Activated naive CD4-positive, alpha-beta T cell treated with anti-CD3 and anti-CD28 coated beads for 36 hours (primary cell): ENCODE measurements at regions of chr11 and their contacts with region 1.

Region 1: DNA sequence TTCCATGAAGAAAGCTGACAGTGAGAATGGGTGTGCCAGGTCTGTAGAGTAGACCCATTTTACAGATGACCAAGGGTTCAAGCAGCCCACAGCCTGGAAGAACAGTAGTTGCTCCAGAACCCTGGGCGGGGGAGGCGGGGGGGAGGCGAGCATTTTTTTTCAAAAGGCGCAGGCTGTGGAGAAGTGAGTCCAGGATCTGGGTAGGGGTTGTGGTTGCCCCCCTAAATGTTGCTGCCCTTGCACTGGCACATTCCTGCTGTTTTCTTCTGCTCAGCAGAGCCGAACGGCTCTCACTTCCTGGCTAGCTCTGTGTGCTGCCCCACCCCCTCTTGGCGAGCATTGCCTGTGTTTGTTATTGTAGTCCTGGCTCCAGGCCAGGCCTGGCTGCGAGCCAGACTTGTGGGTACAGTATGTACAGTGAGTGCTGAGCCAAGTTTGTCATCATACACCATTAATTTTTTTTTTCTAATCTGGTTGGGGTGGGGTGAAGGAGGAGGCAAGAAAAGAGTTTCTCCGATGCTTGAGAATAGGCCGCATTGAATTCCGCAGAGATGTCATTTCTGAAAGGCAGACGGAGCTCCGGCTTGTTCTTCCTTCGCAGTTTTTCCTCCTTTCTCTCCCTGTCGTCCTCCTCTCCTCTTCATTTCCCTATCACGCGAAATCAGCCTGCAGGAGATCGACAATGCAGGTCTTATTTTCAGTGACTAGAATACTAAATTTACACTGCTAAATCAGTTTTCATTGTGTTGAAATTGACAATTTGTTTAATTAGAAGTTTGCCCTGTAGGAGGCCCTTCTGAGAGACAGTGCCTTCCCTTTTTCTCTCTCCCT is 100.5 kb downstream of the ZBTB16 start:
- DNase-seq: peak; percentile 96
- H3K4me3 Mint-ChIP-seq: peak overlapping the region; percentile 25
- H3K27ac Mint-ChIP-seq: peak overlapping the region; percentile 50
- H3K4me1 Mint-ChIP-seq: peaks cover 78% of the 10 kb centered on the region
- H3K27me3 Mint-ChIP-seq: no peaks in the 10 kb centered on the region

Region 2: DNA sequence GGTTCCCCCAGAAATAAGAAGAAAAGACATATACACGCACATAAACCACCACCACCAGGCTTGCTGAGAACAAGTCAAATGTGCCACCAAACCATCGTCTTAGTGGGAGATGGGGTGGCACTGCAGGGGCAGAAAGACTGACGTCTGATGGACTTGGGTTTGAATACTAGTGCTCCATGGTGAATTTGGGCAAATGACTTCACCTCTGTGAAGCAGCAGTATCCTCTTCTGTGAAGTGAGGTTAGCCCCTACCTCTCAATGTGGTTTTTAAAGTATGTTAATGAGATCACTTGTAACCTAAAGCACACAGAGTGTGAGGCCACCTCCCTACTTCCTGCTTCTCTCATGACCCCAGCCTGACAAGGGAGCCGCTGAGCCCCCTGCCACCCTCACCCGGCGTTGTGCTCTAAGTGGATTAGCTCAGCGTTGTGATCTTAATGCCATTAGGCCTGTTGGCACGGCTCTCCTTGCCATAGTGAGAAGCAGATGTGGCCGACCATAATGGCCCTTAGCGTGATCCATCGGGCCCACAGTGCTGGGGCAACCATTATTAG is 86.1 kb before region 1 on chr11:
- CTCF ChIA-PET with region 1: no interaction called
- intact Hi-C with region 1: loop called (anchors 2 kb)
- DNase-seq: no peak
- H3K4me3 Mint-ChIP-seq: peak overlapping the region; percentile 20
- H3K27ac Mint-ChIP-seq: peak overlapping the region; percentile 78
- H3K4me1 Mint-ChIP-seq: peaks cover 60% of the 10 kb centered on the region
- H3K27me3 Mint-ChIP-seq: peaks cover 4% of the 10 kb centered on the region

Region 3: GRCh38 chr11:114134870-114135269 is 25.1 kb before region 1 on chr11:
- CTCF ChIA-PET with region 1: interaction called, 3 read pairs
- intact Hi-C with region 1: loop called (anchors 1 kb)
- DNase-seq: no peak
- H3K4me3 Mint-ChIP-seq: no peak overlapping the region
- H3K27ac Mint-ChIP-seq: no peak overlapping the region
- H3K4me1 Mint-ChIP-seq: peaks cover 44% of the 10 kb centered on the region
- H3K27me3 Mint-ChIP-seq: no peaks in the 10 kb centered on the region